ENCODE measurements at regions of chr17 and their contacts with region 1.

Region 1: GRCh38 chr17:29111816-29112499 is 68.2 kb downstream of the MYO18A start:
- DNase-seq: peak; percentile 92

Region 2: GRCh38 chr17:28967221-28968140 is 144.5 kb before region 1 on chr17:
- intact Hi-C with region 1: loop called (anchors 2 to 5 kb)
- DNase-seq: no peak